ENCODE measurements at regions of chr12 and their contacts with region 1.

Region 1: GRCh38 chr12:109573029-109573913 is at the starts of genes MMAB and MVK:
- DNase-seq: peak; percentile 99
- H3K4me3 Mint-ChIP-seq: peak within 1 kb of the TSS; percentile 93
- H3K27ac Mint-ChIP-seq: peak within 1 kb of the TSS; percentile 95
- H3K4me1 Mint-ChIP-seq: peaks cover 22% of the 10 kb centered on the region
- H3K27me3 Mint-ChIP-seq: no peaks in the 10 kb centered on the region
- total RNA-seq, gene MMAB: 44.3 and 45.8 TPM in 2 replicates
- total RNA-seq, gene MVK: 20.7 and 21.5 TPM in 2 replicates

Region 2: GRCh38 chr12:108856428-108857157 is 716.7 kb before region 1 on chr12:
- intact Hi-C with region 1: loop called (anchors 5 kb)
- DNase-seq: peak; percentile 84
- H3K4me3 Mint-ChIP-seq: peak overlapping the region; percentile 91
- H3K27ac Mint-ChIP-seq: peak overlapping the region; percentile 84
- H3K4me1 Mint-ChIP-seq: peaks cover 43% of the 10 kb centered on the region
- H3K27me3 Mint-ChIP-seq: peaks cover 1% of the 10 kb centered on the region

Region 3: DNA sequence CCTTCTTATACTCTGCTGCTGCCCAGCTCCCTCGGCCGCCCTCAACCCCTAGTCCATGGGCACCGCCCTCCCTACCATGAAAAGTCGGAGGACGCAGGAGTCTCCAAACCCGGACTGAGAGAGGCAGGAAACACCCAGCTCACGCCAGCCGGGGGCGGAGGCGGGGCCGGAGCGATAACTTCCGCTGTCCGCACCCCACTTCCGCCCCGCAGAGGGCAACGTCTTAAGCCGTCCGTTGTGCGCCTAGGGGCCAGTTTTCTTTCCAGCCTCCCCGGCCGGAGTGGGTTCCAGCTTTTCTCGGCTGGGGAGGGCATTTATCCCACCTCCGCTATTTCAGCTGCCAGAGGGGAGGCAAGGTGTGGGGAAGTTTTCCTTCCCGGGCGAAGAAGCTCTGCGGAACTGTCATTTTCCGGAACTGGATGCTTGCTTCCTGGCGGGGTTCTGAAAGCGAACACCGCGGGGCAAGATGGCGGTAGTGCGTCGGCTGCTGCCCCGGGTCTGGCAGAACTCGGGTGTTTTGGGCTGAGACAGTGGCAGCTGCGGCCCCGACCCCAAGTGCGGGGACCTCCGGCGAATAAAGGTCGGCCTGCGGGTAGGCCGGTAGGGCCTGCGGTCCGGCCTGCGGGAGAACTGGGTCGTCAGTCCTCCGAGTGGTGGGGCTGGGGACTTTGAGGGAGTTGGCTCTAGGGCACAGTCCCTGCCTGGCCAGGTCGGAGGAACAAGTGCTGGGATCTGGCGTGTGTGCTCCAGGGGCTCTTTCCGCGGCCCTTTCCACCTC is 95.9 kb before region 1 on chr12 and contains the starts of genes KCTD10 and UBE3B:
- intact Hi-C with region 1: loop called (anchors 5 kb)
- DNase-seq: peak; percentile 97
- H3K4me3 Mint-ChIP-seq: peak within 1 kb of the TSS; percentile 94
- H3K27ac Mint-ChIP-seq: peak within 1 kb of the TSS; percentile 99
- H3K4me1 Mint-ChIP-seq: peaks cover 30% of the 10 kb centered on the region
- H3K27me3 Mint-ChIP-seq: peaks cover 2% of the 10 kb centered on the region
- total RNA-seq, gene KCTD10: 47.5 and 48.5 TPM in 2 replicates
- total RNA-seq, gene UBE3B: 28.9 and 32.2 TPM in 2 replicates

Region 4: GRCh38 chr12:109713187-109713984 is 140.1 kb after region 1 on chr12 and contains the start of gene FAM222A:
- intact Hi-C with region 1: loop called (anchors 1 kb)
- DNase-seq: peak; percentile 99
- H3K4me3 Mint-ChIP-seq: peak within 1 kb of the TSS; percentile 67
- H3K27ac Mint-ChIP-seq: no peak within 1 kb of the TSS
- H3K4me1 Mint-ChIP-seq: no peaks in the 10 kb centered on the region
- H3K27me3 Mint-ChIP-seq: peaks cover 53% of the 10 kb centered on the region
- total RNA-seq, gene FAM222A: 1.3 and 1.5 TPM in 2 replicates

Region 5: DNA sequence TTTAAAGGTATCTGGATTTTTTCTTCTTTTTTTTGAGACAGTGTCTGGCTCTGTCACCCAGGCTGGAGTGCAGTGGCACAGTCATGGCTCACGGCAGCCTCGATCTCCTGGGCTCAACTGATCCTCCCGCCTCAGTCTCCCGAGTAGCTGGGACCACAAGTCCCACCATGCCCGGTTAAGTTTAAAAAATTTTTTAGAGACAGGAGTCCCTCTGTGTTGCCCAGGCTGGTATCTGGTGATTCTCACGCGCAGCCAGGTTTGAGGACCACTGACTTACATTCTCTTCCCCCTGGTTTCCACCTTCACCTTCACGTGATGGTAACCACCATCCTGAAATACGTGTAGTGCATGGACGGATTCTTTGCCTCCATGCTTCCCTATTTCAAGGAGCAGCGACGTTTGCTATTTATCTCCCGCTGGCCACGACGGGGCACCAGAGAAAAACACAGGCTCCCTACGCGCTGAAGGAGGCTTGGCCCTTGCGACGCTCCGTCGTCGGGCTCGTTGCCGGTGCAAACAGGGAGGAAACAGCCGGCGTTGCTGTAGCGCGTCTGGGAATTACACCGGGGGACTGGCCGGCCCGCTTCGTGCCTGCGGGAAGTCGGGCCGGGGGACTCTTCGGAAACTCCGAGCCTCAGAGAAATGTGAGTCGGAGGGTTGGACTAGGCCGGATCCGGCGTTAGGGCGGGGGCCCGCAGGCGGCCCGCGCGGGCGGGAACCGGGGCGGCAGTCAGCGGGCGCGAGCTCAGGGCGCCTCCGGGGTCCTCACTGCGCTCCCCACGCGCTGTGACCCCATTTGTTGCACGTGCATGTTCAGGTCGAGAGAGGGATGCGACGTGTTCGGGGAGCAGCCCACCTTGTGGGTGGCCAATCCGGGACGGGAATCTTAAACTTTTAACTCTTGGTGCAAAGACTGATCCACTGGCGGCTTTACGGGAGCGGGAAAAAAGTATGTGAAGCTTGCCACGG is 326.8 kb after region 1 on chr12 and contains the start of gene TCHP:
- intact Hi-C with region 1: loop called (anchors 5 kb)
- DNase-seq: peak; percentile 93
- H3K4me3 Mint-ChIP-seq: peak within 1 kb of the TSS; percentile 90
- H3K27ac Mint-ChIP-seq: peak within 1 kb of the TSS; percentile 98
- H3K4me1 Mint-ChIP-seq: peaks cover 17% of the 10 kb centered on the region
- H3K27me3 Mint-ChIP-seq: no peaks in the 10 kb centered on the region
- total RNA-seq, gene TCHP: 30.9 and 34.0 TPM in 2 replicates

Measured in activated CD4-positive, alpha-beta T cell treated with anti-CD3 and anti-CD28 coated beads, Interleukin-2, amount 10 ng/mL, durations not matched to agents 24 days and 14 days (primary cell).